ENCODE measurements at regions of chr4 and their contacts with region 1.

Region 1: GRCh38 chr4:11428899-11429698 is 405 bp upstream of the HS3ST1 start:
- DNase-seq: peak; percentile 39
- ATAC-seq: peak; percentile 97
- H3K4me3 ChIP-seq: peak overlapping the region; percentile 44 to 82
- H3K27ac ChIP-seq: no peak overlapping the region
- H3K4me1 ChIP-seq: no peaks in the 10 kb centered on the region
- H3K27me3 ChIP-seq: no peaks in the 10 kb centered on the region; the same call in 1 of the 2 replicates
- CTCF ChIP-seq: peak; percentile 82

Region 2: DNA sequence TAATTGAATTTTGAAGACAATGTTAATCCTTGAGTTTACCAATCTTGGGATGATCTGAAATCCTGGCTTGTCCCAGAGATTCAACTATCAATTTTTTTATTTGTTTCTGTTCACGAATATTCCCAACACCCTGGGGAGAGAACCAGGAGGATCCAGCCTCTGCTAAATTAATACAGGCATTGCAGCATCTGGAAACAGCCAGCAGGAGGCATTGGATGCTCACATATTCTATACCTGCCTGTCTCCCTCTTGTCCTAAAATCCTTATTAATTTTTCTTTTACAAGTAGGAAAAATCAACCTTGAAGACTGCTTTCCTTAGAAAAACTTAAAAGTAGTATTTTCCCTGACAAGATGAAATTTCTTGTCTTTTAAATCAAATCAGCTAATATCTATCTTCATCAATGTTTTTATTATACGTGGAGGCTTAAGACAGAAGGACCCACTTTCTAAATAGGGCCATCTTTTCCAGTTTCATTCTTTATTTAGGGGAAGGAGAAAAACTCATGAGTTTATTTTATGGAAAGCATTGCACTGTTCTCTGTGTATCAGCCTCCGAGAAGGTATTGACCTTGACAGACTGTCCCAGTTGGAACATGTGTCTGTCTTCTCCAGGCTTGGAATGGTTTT is 846.9 kb before region 1 on chr4:
- CTCF ChIA-PET with region 1: no interaction called
- POLR2A ChIA-PET with region 1: no interaction called
- in situ Hi-C with region 1: no loop called
- intact Hi-C with region 1: loop called (anchors 2 kb)
- DNase-seq: peak; percentile 48
- ATAC-seq: peak; percentile 82
- H3K4me3 ChIP-seq: no peak overlapping the region
- H3K27ac ChIP-seq: no peak overlapping the region
- H3K4me1 ChIP-seq: no peaks in the 10 kb centered on the region
- H3K27me3 ChIP-seq: no peaks in the 10 kb centered on the region
- CTCF ChIP-seq: peak; percentile 81

Region 3: DNA sequence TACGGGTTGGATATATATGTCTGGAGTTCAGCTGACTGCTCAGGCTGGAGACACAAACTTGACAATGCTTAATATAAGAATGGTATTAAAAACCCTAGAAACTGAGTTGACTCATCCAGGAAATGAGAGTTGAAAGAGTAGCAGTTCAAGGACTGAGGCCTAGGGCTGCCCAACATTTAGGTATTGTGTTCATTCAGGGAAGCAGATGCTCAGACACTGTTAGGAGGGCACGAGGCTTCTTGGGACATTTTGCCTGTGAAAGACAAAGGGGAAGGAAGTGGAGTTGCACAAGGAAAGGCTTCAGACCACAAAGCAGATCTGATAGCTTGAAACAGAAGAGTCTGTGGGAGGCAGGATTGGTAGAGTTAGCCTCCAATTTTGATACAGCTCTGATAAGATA is 51.6 kb after region 1 on chr4:
- CTCF ChIA-PET with region 1: interaction called, 10 read pairs
- POLR2A ChIA-PET with region 1: no interaction called
- in situ Hi-C with region 1: no loop called
- intact Hi-C with region 1: no loop called
- DNase-seq: no peak
- ATAC-seq: no peak
- H3K4me3 ChIP-seq: no peak overlapping the region
- H3K27ac ChIP-seq: no peak overlapping the region
- H3K4me1 ChIP-seq: no peaks in the 10 kb centered on the region
- H3K27me3 ChIP-seq: no peaks in the 10 kb centered on the region
- CTCF ChIP-seq: no peak